ENCODE measurements at regions of chr6 and their contacts with region 1.

Region 1: GRCh38 chr6:41920921-41921711 is at the starts of genes BYSL and MED20:
- DNase-seq: peak; percentile 96 to 97
- ATAC-seq: peak; percentile 90 to 95 (median 92)
- H3K4me3 ChIP-seq: peak within 1 kb of the TSS; percentile 94
- H3K4me3 Mint-ChIP-seq: peak within 1 kb of the TSS; percentile 96
- H3K27ac ChIP-seq: peak within 1 kb of the TSS; percentile 96
- H3K27ac Mint-ChIP-seq: peak within 1 kb of the TSS; percentile 98
- H3K4me1 ChIP-seq: peaks cover 33% of the 10 kb centered on the region
- H3K4me1 Mint-ChIP-seq: peaks cover 57 to 60% of the 10 kb centered on the region in 2 donors
- H3K27me3 ChIP-seq: no peaks in the 10 kb centered on the region
- H3K27me3 Mint-ChIP-seq: no peaks in the 10 kb centered on the region
- CTCF ChIP-seq: peak; percentile 91
- total RNA-seq, gene BYSL: 5.4 to 11.6 (median 5.7) TPM
- total RNA-seq, gene MED20: 6.4 to 15.2 (median 15.0) TPM

Region 2: DNA sequence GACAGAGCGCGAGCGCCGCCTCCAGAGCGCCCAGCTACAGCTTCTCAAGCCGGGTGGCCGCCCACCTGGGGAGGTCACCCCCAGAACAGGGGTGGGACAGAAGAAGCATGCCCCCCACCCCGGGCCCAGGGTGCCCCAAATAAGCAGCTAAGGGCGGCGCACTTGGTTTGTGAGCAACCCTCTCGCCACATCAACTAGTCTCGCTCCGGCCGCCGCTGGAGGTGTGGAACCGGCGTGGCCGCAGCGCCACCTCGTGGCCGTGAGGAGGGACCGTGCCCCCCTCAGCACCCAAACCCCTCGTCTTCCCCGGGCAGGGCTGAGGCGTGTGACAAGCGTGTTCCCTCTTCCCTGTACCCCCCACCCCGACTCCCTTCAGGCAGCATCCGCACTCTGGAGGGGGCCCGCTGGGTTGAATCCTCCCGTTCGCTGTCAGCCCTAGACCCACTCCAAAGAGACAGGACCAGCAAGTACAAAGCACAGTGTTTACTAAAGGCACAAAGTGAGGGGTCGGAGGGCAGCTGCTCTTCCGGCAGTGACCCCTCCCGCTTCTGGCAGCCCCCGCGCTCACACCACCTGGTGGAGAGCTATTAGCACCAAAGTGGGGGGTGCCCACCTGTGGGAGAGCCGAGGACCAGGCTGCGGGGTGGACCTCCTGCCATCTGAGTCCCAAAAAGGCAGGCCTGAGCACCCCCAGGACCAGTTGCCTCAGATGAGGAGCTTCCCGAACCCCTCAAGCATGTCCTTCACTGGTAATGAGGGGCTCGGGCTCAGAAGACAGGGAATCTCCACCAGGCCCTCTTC is 237.4 kb before region 1 on chr6:
- intact Hi-C with region 1: no loop called
- DNase-seq: peak; percentile 79 to 90
- ATAC-seq: peak; percentile 87 to 88 (median 88)
- H3K4me3 ChIP-seq: peak overlapping the region; percentile 43
- H3K4me3 Mint-ChIP-seq: peak overlapping the region; percentile 79
- H3K27ac ChIP-seq: peak overlapping the region; percentile 18
- H3K27ac Mint-ChIP-seq: peak overlapping the region; percentile 53 to 87
- H3K4me1 ChIP-seq: peaks cover 23% of the 10 kb centered on the region
- H3K4me1 Mint-ChIP-seq: peaks cover 0 to 19% of the 10 kb centered on the region in 2 donors
- H3K27me3 ChIP-seq: no peaks in the 10 kb centered on the region
- H3K27me3 Mint-ChIP-seq: no peaks in the 10 kb centered on the region
- CTCF ChIP-seq: peak; percentile 93

Region 3: GRCh38 chr6:41895300-41896233 is 25.5 kb before region 1 on chr6 and contains the start of gene USP49:
- intact Hi-C with region 1: loop called (anchors 1 kb)
- DNase-seq: peak; percentile 92 to 95
- ATAC-seq: peak; percentile 88 to 96 (median 90)
- H3K4me3 ChIP-seq: peak within 1 kb of the TSS; percentile 86
- H3K4me3 Mint-ChIP-seq: no peak within 1 kb of the TSS
- H3K27ac ChIP-seq: peak within 1 kb of the TSS; percentile 85
- H3K27ac Mint-ChIP-seq: no peak within 1 kb of the TSS
- H3K4me1 ChIP-seq: peaks cover 14% of the 10 kb centered on the region
- H3K4me1 Mint-ChIP-seq: peaks cover 11 to 13% of the 10 kb centered on the region in 2 donors
- H3K27me3 ChIP-seq: no peaks in the 10 kb centered on the region
- H3K27me3 Mint-ChIP-seq: no peaks in the 10 kb centered on the region
- CTCF ChIP-seq: no peak
- total RNA-seq, gene USP49: 6.4 to 15.1 (median 11.5) TPM

Region 4: GRCh38 chr6:41966961-41967311 is 45.8 kb after region 1 on chr6:
- intact Hi-C with region 1: no loop called
- DNase-seq: no peak
- ATAC-seq: no peak
- H3K4me3 ChIP-seq: no peak overlapping the region
- H3K4me3 Mint-ChIP-seq: no peak overlapping the region
- H3K27ac ChIP-seq: no peak overlapping the region
- H3K27ac Mint-ChIP-seq: peak overlapping the region; percentile 70 to 73
- H3K4me1 ChIP-seq: peaks cover 66% of the 10 kb centered on the region
- H3K4me1 Mint-ChIP-seq: peaks cover 68 to 76% of the 10 kb centered on the region in 2 donors
- H3K27me3 ChIP-seq: no peaks in the 10 kb centered on the region
- H3K27me3 Mint-ChIP-seq: no peaks in the 10 kb centered on the region
- CTCF ChIP-seq: no peak